ENCODE measurements at regions of chr3 and their contacts with region 1.

Region 1: GRCh38 chr3:112111785-112112402 is 21.2 kb downstream of the GCSAM start:
- DNase-seq: peak; percentile 45
- H3K4me3 ChIP-seq: no peak overlapping the region
- CTCF ChIP-seq: peak; percentile 88

Region 2: DNA sequence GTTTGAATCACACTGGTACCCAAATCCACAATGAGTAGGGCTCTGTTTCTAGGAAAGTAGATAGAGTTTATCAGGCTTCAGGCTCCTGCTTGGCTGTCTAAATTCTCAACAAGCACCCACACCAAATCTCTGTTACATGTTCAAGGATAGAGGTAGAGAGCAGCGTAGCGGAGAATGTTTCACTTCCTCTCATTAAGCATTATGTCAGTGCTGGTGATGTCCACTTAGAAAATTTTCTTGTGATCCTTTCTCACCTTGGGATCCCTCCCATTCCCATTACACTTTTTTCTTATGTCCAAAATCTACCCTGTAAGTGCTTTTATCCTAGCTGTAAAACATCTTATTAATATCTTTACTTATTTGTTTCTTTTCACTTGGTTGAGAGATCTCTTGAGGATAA is 55.9 kb after region 1 on chr3:
- in situ Hi-C with region 1: no loop called
- DNase-seq: no peak
- H3K4me3 ChIP-seq: no peak overlapping the region
- CTCF ChIP-seq: no peak

Region 3: DNA sequence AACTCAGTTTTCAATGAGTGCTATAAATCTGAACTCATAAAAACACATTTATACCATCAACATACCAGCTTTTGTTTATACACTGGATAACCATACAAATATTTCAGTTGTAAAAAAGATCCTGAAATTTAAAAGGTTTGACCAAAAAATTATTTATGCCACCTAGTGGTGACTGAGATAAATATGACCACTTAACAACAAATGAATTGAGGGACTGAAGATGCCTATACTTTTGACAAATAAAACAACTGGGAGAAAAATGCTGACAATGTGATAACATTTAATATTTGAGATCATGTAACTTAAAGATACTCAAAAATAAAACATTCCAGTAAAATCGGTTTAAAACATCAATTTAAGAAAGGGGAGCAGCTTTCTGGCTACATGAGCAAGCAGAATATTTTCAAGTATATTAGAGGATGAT is 419.5 kb after region 1 on chr3:
- in situ Hi-C with region 1: loop called (anchors 25 kb)
- DNase-seq: peak; percentile 43
- H3K4me3 ChIP-seq: no peak overlapping the region
- CTCF ChIP-seq: no peak

Measured in astrocyte of the cerebellum (primary cell).